Posterior vena cava (tissue), 2 donors: ENCODE measurements at regions of chr6 and their contacts with region 1.

Region 1: DNA sequence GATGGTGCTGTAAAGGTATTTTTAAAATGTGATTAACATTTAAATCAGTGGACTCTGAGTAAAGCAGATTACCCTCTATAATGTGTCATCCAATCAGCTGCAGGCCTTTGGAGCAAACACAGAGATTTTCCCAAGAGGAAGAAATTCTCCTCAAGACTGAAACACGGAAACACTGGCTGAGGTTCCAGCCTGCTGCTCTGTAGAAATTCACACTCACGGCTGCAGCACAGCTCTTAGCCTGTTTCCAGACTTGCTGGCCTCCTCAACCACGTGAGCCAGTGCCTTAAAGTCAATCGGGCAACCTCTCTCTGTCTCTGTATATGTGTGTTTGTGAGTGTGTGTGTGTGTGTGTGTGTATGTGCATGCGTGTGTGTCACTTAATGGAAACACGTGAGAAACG is 41.1 kb downstream of the PDE10A start:
- DNase-seq: no peak

Region 2: GRCh38 chr6:166450167-166450873 is 828.4 kb after region 1 on chr6:
- intact Hi-C with region 1: no loop called
- DNase-seq: no peak

Region 3: DNA sequence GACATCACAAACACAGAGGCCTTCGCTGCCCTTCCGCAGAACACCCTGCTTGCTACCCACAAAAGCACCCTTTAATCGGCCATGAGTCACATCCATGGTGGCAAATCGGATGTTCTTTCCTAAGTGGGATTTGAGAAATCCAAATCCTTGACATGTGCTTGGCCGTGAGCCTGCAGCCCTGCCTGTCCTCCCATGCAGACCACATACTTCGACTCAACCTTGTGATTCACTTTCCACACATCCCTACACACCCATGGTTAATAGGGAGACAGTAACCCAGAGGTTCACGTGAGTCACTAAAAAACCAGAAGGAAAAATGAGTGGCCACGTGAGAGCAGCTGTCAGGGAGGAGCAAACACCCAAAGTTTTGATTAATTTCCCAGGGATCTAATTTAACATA is 945.2 kb after region 1 on chr6:
- intact Hi-C with region 1: loop called in 1 of 2 experiments (anchors 10 kb)
- DNase-seq: peak; percentile 63